ENCODE measurements at regions of chr12 and their contacts with region 1.

Region 1: GRCh38 chr12:49644620-49644994 is 21.2 kb downstream of the PRPF40B start:
- DNase-seq: peak; percentile 81
- H3K4me3 ChIP-seq: no peak overlapping the region
- H3K27ac ChIP-seq: no peak overlapping the region
- H3K4me1 ChIP-seq: peaks cover 9% of the 10 kb centered on the region
- H3K27me3 ChIP-seq: no peaks in the 10 kb centered on the region
- CTCF ChIP-seq: peak; percentile 91

Region 2: DNA sequence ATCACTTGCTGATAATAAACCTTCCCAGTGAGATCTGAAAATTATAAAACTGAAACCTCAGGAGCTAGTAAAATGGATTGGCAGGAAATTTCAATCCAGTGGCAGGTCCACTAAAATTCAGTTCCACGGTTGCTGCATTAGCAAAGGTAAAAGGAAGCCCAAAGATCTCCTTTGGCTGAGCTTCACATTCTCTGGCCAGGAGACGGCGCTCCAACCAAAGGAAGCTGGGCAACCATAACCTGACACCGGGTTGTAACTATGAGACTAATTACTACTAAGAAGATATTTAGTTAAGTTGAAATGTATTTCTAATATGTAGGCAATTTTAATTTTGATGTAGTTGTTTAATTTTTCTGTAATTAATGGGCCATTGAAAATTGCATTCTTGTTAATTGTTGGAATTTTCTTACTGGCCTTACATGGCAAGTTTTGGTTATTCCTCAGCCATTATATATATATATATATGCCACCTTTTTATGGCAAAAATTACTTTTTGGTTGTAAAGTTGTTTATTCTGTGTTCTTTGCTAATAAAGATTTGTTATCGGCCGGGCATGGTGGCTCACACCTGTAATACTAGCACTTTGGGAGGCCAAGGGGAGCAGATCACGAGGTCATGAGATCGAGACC is 1102.2 kb before region 1 on chr12:
- CTCF ChIA-PET with region 1: no interaction called
- POLR2A ChIA-PET with region 1: no interaction called
- intact Hi-C with region 1: no loop called
- DNase-seq: peak; percentile 33
- H3K4me3 ChIP-seq: no peak overlapping the region
- H3K27ac ChIP-seq: no peak overlapping the region
- H3K4me1 ChIP-seq: no peaks in the 10 kb centered on the region
- H3K27me3 ChIP-seq: peaks cover 9% of the 10 kb centered on the region
- CTCF ChIP-seq: peak; percentile 66

Region 3: GRCh38 chr12:49428793-49429192 is 215.8 kb before region 1 on chr12:
- CTCF ChIA-PET with region 1: no interaction called
- POLR2A ChIA-PET with region 1: no interaction called
- intact Hi-C with region 1: no loop called
- DNase-seq: peak; percentile 82
- H3K4me3 ChIP-seq: no peak overlapping the region
- H3K27ac ChIP-seq: no peak overlapping the region
- H3K4me1 ChIP-seq: peaks cover 18% of the 10 kb centered on the region
- H3K27me3 ChIP-seq: no peaks in the 10 kb centered on the region
- CTCF ChIP-seq: no peak

Region 4: GRCh38 chr12:49615725-49616124 is 28.9 kb before region 1 on chr12:
- CTCF ChIA-PET with region 1: no interaction called
- POLR2A ChIA-PET with region 1: no interaction called
- intact Hi-C with region 1: no loop called
- DNase-seq: no peak
- H3K4me3 ChIP-seq: no peak overlapping the region
- H3K27ac ChIP-seq: no peak overlapping the region
- H3K4me1 ChIP-seq: peaks cover 7% of the 10 kb centered on the region
- H3K27me3 ChIP-seq: no peaks in the 10 kb centered on the region
- CTCF ChIP-seq: no peak

Region 5: GRCh38 chr12:49707128-49707811 is 62.7 kb after region 1 on chr12 and contains the start of gene FMNL3:
- CTCF ChIA-PET with region 1: interaction called, 5 read pairs
- POLR2A ChIA-PET with region 1: no interaction called
- intact Hi-C with region 1: loop called (anchors 1 kb)
- DNase-seq: peak; percentile 98
- H3K4me3 ChIP-seq: peak within 1 kb of the TSS; percentile 73
- H3K27ac ChIP-seq: peak within 1 kb of the TSS; percentile 88
- H3K4me1 ChIP-seq: peaks cover 9% of the 10 kb centered on the region
- H3K27me3 ChIP-seq: peaks cover 10% of the 10 kb centered on the region
- CTCF ChIP-seq: peak; percentile 85
- total RNA-seq, gene FMNL3: 22.0 and 27.7 TPM in 2 replicates

Region 6: GRCh38 chr12:49763006-49763591 is 118.5 kb after region 1 on chr12:
- CTCF ChIA-PET with region 1: no interaction called
- POLR2A ChIA-PET with region 1: no interaction called
- intact Hi-C with region 1: loop called (anchors 2 kb)
- DNase-seq: peak; percentile 79
- H3K4me3 ChIP-seq: no peak overlapping the region
- H3K27ac ChIP-seq: peak overlapping the region; percentile 22
- H3K4me1 ChIP-seq: no peaks in the 10 kb centered on the region
- H3K27me3 ChIP-seq: no peaks in the 10 kb centered on the region
- CTCF ChIP-seq: peak; percentile 89

Region 7: GRCh38 chr12:49789992-49790391 is 145.4 kb after region 1 on chr12:
- CTCF ChIA-PET with region 1: no interaction called
- POLR2A ChIA-PET with region 1: interaction called, 15 read pairs
- intact Hi-C with region 1: no loop called
- DNase-seq: no peak
- H3K4me3 ChIP-seq: no peak overlapping the region
- H3K27ac ChIP-seq: no peak overlapping the region
- H3K4me1 ChIP-seq: no peaks in the 10 kb centered on the region
- H3K27me3 ChIP-seq: no peaks in the 10 kb centered on the region
- CTCF ChIP-seq: no peak